Heart left ventricle (tissue), 16 donors: ENCODE measurements at regions of chr7 and their contacts with region 1.

Region 1: DNA sequence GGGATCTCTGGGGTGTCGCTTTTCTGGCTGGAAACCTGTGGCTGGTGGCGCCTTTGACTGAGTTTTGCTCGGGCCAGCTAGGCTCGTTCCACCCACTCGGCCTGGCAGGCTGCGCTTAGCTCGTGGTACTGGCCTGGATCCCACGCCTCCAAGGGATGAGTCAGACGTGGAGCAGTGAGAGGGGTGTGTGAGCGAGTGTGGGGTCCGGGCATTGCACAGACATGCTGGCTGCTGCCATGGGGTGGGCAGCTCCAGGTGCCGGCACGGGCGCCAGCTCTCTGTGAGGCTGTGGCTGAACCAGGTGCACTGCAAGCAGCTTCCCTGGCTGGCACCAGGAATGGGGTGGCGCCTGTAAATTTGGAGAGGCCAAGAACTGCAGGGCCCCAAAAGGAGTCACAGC is 63.1 kb upstream of the CACNA2D1 start:
- DNase-seq: peak in 3 of 5 donors; percentile 24 to 41 (median 27)
- ATAC-seq: peak in 3 of 4 donors; percentile 34 to 65 (median 63)
- H3K4me3 ChIP-seq: no peak overlapping the region
- H3K27ac ChIP-seq: no peak overlapping the region
- H3K4me1 ChIP-seq: no peaks in the 10 kb centered on the region
- H3K27me3 ChIP-seq: peaks cover 0 to 3% (median 0%) of the 10 kb centered on the region in 9 donors
- CTCF ChIP-seq: no peak
- POLR2A ChIP-seq: no peak

Region 2: GRCh38 chr7:82527831-82528230 is 21.1 kb after region 1 on chr7:
- intact Hi-C with region 1: no loop called
- DNase-seq: no peak
- ATAC-seq: no peak
- H3K4me3 ChIP-seq: no peak overlapping the region
- H3K27ac ChIP-seq: no peak overlapping the region
- H3K4me1 ChIP-seq: no peaks in the 10 kb centered on the region
- H3K27me3 ChIP-seq: no peaks in the 10 kb centered on the region
- CTCF ChIP-seq: no peak
- POLR2A ChIP-seq: no peak

Region 3: GRCh38 chr7:82559193-82559805 is 52.6 kb after region 1 on chr7:
- intact Hi-C with region 1: loop called in 1 of 10 experiments (anchors 10 kb)
- DNase-seq: peak in 1 of 5 donors; percentile 29
- ATAC-seq: no peak
- H3K4me3 ChIP-seq: peak overlapping the region in 2 of 12 donors; percentile 2 to 21
- H3K27ac ChIP-seq: no peak overlapping the region
- H3K4me1 ChIP-seq: peaks cover 0 to 5% (median 0%) of the 10 kb centered on the region in 12 donors
- H3K27me3 ChIP-seq: no peaks in the 10 kb centered on the region
- CTCF ChIP-seq: no peak
- POLR2A ChIP-seq: no peak

Region 4: GRCh38 chr7:83550100-83550499 is 1043.4 kb after region 1 on chr7:
- intact Hi-C with region 1: no loop called
- DNase-seq: no peak
- ATAC-seq: no peak
- H3K4me3 ChIP-seq: no peak overlapping the region
- H3K27ac ChIP-seq: no peak overlapping the region
- H3K4me1 ChIP-seq: no peaks in the 10 kb centered on the region
- H3K27me3 ChIP-seq: no peaks in the 10 kb centered on the region
- CTCF ChIP-seq: no peak
- POLR2A ChIP-seq: no peak